ENCODE measurements at regions of chr9 and their contacts with region 1.

Region 1: DNA sequence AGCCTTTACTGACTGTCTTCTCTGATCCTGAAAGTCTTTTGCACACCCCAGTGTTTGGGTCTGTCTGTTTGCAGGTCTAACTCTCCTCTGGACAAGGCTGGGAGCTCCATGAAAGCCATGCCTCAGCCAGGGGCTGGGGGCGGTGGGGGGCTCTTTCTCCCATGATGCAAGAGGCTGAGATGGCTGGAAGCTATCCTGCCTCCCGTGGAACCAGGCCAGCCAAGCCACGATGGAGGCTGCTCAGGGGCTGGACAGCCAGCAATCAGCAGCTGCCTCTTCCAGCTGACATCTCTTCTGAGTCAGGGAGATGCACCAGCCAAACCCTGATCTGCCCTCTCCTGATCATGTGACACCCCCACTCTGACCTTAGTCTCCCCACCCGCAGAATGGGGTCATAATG is 154.0 kb downstream of the BARX1 start:
- DNase-seq: no peak
- ATAC-seq: no peak
- H3K4me3 ChIP-seq: no peak overlapping the region
- H3K27ac ChIP-seq: no peak overlapping the region
- H3K4me1 ChIP-seq: no peaks in the 10 kb centered on the region
- H3K27me3 ChIP-seq: 0 out of 2 replicates have a peak, but pooled peaks cover 2% of the 10 kb centered on the region
- CTCF ChIP-seq: no peak

Region 2: DNA sequence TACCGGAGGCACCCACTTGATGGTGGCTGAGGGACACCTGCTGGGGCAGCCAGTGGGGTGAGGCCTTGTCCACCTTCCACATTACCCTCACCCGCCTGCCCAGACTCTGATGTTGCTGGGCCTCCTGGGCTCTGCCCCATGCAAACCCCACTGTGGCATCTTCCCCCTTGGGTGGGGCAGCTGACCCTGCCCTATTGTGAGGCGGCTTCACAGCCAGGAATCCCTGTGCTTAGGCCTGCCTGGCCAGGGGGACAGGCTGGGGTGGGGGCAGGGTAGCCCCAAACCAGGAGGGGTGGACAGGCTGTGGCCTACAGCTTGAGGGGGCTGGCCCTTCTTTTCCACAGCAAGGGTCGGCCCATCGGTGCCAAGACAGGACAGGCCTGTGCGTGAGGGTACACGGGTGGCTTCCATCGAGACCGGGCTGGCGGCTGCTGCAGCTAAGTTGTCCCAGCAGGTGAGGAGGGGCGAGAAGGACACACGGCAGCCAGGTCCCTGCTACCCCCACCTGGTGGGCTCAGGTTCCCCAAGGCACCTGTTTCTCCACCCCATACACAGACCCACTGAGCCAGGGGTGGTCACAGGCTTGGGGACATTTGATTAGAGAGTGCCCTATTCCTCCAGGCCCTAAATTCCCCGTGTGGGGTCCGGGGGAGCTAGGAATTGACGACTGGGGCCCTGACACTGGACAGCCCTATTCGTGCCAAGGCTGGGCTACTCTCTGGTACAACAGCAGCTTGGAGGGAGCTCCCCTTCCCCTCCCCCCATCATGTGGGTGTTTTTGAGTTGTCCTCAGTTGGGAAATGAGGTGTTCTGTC is 125.6 kb before region 1 on chr9:
- CTCF ChIA-PET with region 1: interaction called, 10 read pairs
- POLR2A ChIA-PET with region 1: no interaction called
- in situ Hi-C with region 1: no loop called
- intact Hi-C with region 1: no loop called
- DNase-seq: no peak
- ATAC-seq: no peak
- H3K4me3 ChIP-seq: no peak overlapping the region
- H3K27ac ChIP-seq: no peak overlapping the region
- H3K4me1 ChIP-seq: no peaks in the 10 kb centered on the region
- H3K27me3 ChIP-seq: no peaks in the 10 kb centered on the region
- CTCF ChIP-seq: no peak

Region 3: GRCh38 chr9:93891549-93892310 is 90.6 kb after region 1 on chr9:
- CTCF ChIA-PET with region 1: no interaction called
- POLR2A ChIA-PET with region 1: no interaction called
- in situ Hi-C with region 1: no loop called
- intact Hi-C with region 1: no loop called
- DNase-seq: no peak
- ATAC-seq: no peak
- H3K4me3 ChIP-seq: no peak overlapping the region
- H3K27ac ChIP-seq: no peak overlapping the region
- H3K4me1 ChIP-seq: no peaks in the 10 kb centered on the region
- H3K27me3 ChIP-seq: no peaks in the 10 kb centered on the region
- CTCF ChIP-seq: no peak

Measured in Panc1 (cell line).